ENCODE measurements at regions of chr1 and their contacts with region 1.

Region 1: GRCh38 chr1:147599362-147600118 is 58.2 kb downstream of the BCL9 start:
- DNase-seq: peak; percentile 98
- H3K4me3 ChIP-seq: peak overlapping the region; percentile 68
- H3K4me3 Mint-ChIP-seq: peak overlapping the region; percentile 78
- H3K27ac Mint-ChIP-seq: peak overlapping the region; percentile 57
- H3K4me1 ChIP-seq: peaks cover 13% of the 10 kb centered on the region
- H3K4me1 Mint-ChIP-seq: peaks cover 15% of the 10 kb centered on the region
- H3K27me3 ChIP-seq: no peaks in the 10 kb centered on the region
- H3K27me3 Mint-ChIP-seq: no peaks in the 10 kb centered on the region
- CTCF ChIP-seq: no peak

Region 2: GRCh38 chr1:147494998-147495580 is 104.5 kb before region 1 on chr1:
- CTCF ChIA-PET with region 1: no interaction called
- POLR2A ChIA-PET with region 1: interaction called, 10 read pairs
- intact Hi-C with region 1: no loop called
- DNase-seq: peak; percentile 68 to 76
- H3K4me3 ChIP-seq: no peak overlapping the region
- H3K4me3 Mint-ChIP-seq: no peak overlapping the region
- H3K27ac Mint-ChIP-seq: no peak overlapping the region
- H3K4me1 ChIP-seq: no peaks in the 10 kb centered on the region
- H3K4me1 Mint-ChIP-seq: no peaks in the 10 kb centered on the region
- H3K27me3 ChIP-seq: no peaks in the 10 kb centered on the region
- H3K27me3 Mint-ChIP-seq: no peaks in the 10 kb centered on the region
- CTCF ChIP-seq: peak; percentile 80 to 92

Region 3: DNA sequence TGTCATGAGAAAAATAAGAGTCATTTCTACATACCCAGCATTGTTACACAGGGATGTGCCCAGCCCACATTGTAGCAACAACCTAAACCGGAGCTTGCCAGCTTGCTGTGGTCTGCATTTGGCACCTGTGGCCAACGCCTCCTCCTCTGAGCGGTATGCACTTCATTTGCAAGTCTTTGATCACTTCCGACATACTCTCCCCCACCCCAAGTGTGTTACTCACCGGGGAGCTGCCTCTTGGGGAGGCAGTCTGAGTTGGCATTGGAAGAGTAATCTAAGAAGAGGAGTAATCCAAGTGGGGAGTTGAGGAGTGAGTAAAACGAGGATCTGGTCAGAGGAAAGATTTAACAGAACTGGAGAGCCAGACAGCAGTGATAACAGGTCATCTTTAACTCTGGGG is 54.4 kb before region 1 on chr1:
- CTCF ChIA-PET with region 1: interaction called, 14 read pairs
- POLR2A ChIA-PET with region 1: interaction called, 32 read pairs
- intact Hi-C with region 1: loop called (anchors 1 kb)
- DNase-seq: no peak
- H3K4me3 ChIP-seq: no peak overlapping the region
- H3K4me3 Mint-ChIP-seq: no peak overlapping the region
- H3K27ac Mint-ChIP-seq: no peak overlapping the region
- H3K4me1 ChIP-seq: peaks cover 13% of the 10 kb centered on the region
- H3K4me1 Mint-ChIP-seq: peaks cover 7% of the 10 kb centered on the region
- H3K27me3 ChIP-seq: no peaks in the 10 kb centered on the region
- H3K27me3 Mint-ChIP-seq: no peaks in the 10 kb centered on the region
- CTCF ChIP-seq: no peak

Region 4: GRCh38 chr1:147574401-147574800 is 25.1 kb before region 1 on chr1:
- CTCF ChIA-PET with region 1: no interaction called
- POLR2A ChIA-PET with region 1: no interaction called
- intact Hi-C with region 1: no loop called
- DNase-seq: no peak
- H3K4me3 ChIP-seq: no peak overlapping the region
- H3K4me3 Mint-ChIP-seq: no peak overlapping the region
- H3K27ac Mint-ChIP-seq: no peak overlapping the region
- H3K4me1 ChIP-seq: peaks cover 14% of the 10 kb centered on the region
- H3K4me1 Mint-ChIP-seq: peaks cover 8% of the 10 kb centered on the region
- H3K27me3 ChIP-seq: no peaks in the 10 kb centered on the region
- H3K27me3 Mint-ChIP-seq: no peaks in the 10 kb centered on the region
- CTCF ChIP-seq: no peak

Region 5: DNA sequence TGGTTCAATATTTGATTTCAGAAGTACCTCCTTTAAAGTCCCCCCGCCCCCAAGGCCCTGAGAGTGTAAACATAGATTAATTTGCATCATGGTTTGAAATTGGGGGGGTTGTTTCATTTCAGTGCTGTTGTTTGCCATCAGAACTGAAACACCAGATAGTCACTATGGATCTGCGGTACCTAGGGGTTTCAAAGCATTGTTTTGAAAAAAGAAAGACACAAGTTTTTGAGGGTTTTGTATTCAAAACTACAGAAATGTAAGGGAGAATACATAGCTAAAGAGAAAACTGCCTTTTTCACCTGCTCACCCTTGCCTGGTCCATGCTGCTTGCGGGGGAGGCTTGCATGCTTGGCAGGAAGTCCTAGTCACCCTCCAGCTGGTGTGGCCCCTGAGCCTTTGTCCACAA is 11.5 kb after region 1 on chr1:
- CTCF ChIA-PET with region 1: interaction called, 3 read pairs
- POLR2A ChIA-PET with region 1: interaction called, 20 read pairs
- intact Hi-C with region 1: loop called (anchors 1 kb)
- DNase-seq: no peak
- H3K4me3 ChIP-seq: no peak overlapping the region
- H3K4me3 Mint-ChIP-seq: no peak overlapping the region
- H3K27ac Mint-ChIP-seq: no peak overlapping the region
- H3K4me1 ChIP-seq: peaks cover 21% of the 10 kb centered on the region
- H3K4me1 Mint-ChIP-seq: peaks cover 19% of the 10 kb centered on the region
- H3K27me3 ChIP-seq: no peaks in the 10 kb centered on the region
- H3K27me3 Mint-ChIP-seq: no peaks in the 10 kb centered on the region
- CTCF ChIP-seq: no peak

Region 6: DNA sequence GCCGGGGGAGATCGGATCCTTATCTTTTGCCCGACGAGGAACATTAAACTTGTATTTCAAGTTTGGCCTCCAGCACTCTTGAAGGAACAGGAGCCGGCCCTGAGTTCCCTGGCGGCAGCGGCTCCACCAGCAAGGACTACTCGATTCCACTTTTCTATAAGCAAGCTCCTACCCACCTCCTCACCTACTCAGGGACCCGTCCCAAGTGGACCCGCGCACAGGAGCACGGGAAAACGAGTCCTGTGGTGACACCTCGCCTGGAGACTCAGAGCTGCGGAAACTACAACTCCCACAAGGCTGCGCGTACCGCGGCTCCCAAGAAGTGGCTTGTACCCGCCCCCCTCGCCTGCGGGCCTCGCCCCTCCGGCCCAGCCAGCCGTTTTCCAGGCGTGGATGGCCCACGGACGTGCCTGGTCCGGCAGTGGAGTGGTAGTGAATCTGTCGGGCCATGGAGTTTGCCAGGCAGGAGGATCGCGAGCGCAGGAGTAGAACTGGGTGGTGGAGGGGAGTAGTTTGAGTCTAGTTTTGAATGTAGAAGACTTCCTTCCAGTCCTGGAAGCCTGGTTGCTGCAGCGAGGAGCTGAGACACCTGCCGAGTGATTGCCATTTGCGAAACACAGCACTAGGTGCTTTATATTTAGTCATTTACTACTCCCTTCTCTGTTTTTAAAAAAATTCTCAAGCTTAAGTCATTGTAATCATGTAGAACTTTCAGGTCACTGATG is 70.9 kb after region 1 on chr1 and contains the start of gene ACP6:
- CTCF ChIA-PET with region 1: interaction called, 10 read pairs
- POLR2A ChIA-PET with region 1: no interaction called
- intact Hi-C with region 1: no loop called
- DNase-seq: peak; percentile 96 to 97
- H3K4me3 ChIP-seq: peak within 1 kb of the TSS; percentile 81
- H3K4me3 Mint-ChIP-seq: peak within 1 kb of the TSS; percentile 93
- H3K27ac Mint-ChIP-seq: peak within 1 kb of the TSS; percentile 86
- H3K4me1 ChIP-seq: peaks cover 7% of the 10 kb centered on the region; the same call in 1 of the 2 replicates
- H3K4me1 Mint-ChIP-seq: peaks cover 15% of the 10 kb centered on the region
- H3K27me3 ChIP-seq: no peaks in the 10 kb centered on the region
- H3K27me3 Mint-ChIP-seq: no peaks in the 10 kb centered on the region
- CTCF ChIP-seq: no peak
- total RNA-seq, gene ACP6: 24.6 and 26.7 TPM in 2 replicates